ENCODE measurements at regions of chr6 and their contacts with region 1.

Region 1: GRCh38 chr6:93721385-93722048 is 302.2 kb upstream of the EPHA7 start:
- DNase-seq: peak; percentile 52
- H3K4me3 ChIP-seq: no peak overlapping the region
- H3K27ac ChIP-seq: no peak overlapping the region
- H3K4me1 ChIP-seq: no peaks in the 10 kb centered on the region
- H3K27me3 ChIP-seq: no peaks in the 10 kb centered on the region
- CTCF ChIP-seq: peak; percentile 62

Region 2: GRCh38 chr6:93164781-93165180 is 556.7 kb before region 1 on chr6:
- CTCF ChIA-PET with region 1: no interaction called
- POLR2A ChIA-PET with region 1: no interaction called
- intact Hi-C with region 1: no loop called
- DNase-seq: no peak
- H3K4me3 ChIP-seq: no peak overlapping the region
- H3K27ac ChIP-seq: no peak overlapping the region
- H3K4me1 ChIP-seq: no peaks in the 10 kb centered on the region
- H3K27me3 ChIP-seq: no peaks in the 10 kb centered on the region
- CTCF ChIP-seq: no peak

Region 3: GRCh38 chr6:94071835-94072234 is 350.3 kb after region 1 on chr6:
- CTCF ChIA-PET with region 1: no interaction called
- POLR2A ChIA-PET with region 1: no interaction called
- intact Hi-C with region 1: loop called (anchors 5 kb)
- DNase-seq: peak; percentile 35
- H3K4me3 ChIP-seq: no peak overlapping the region
- H3K27ac ChIP-seq: no peak overlapping the region
- H3K4me1 ChIP-seq: no peaks in the 10 kb centered on the region
- H3K27me3 ChIP-seq: no peaks in the 10 kb centered on the region
- CTCF ChIP-seq: peak; percentile 59

Region 4: DNA sequence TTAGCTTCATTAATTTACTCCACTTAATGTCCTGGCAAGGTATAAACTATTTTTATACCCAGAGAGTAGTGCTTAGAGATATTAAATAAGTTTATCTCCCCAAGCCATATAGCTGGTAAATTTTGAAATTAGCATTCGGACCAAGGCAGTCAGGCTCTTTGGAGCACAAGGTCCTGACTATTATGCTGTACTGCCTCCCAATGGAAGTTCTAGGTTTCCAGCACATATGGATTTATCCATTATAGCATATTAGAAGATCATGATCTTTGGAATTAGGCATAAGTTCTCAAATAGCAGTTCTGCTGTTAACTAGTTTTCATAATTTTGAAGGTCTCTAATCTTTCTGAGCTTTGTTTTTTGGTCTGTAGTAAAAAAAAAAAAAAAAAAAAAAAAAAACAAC is 533.2 kb after region 1 on chr6:
- CTCF ChIA-PET with region 1: no interaction called
- POLR2A ChIA-PET with region 1: no interaction called
- intact Hi-C with region 1: loop called (anchors 10 kb)
- DNase-seq: peak; percentile 33
- H3K4me3 ChIP-seq: no peak overlapping the region
- H3K27ac ChIP-seq: no peak overlapping the region
- H3K4me1 ChIP-seq: no peaks in the 10 kb centered on the region
- H3K27me3 ChIP-seq: no peaks in the 10 kb centered on the region
- CTCF ChIP-seq: peak; percentile 49

Measured in A673 (cell line).